ENCODE measurements at regions of chr9 and their contacts with region 1.

Region 1: DNA sequence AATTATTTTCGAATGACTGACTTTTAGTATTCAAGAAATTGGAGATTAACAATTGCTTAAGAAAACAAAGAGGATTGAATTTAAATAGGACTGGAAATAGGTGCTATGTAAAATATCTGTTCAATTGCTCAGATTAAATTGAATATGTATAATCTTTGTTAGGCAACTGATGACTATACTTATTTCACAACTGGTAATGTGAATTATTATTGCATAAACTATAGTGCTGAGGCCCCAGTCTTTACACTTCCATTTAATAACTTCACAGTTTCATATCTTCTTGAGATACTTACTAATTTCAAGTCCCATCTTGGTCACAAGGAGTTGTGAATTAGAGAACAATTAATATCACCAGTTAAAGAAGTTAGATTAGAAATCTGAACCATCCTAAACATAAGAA is 16.7 kb downstream of the CEP78 start:
- DNase-seq: no peak
- H3K4me3 ChIP-seq: no peak overlapping the region
- H3K27ac ChIP-seq: no peak overlapping the region
- H3K4me1 ChIP-seq: no peaks in the 10 kb centered on the region
- CTCF ChIP-seq: no peak

Region 2: GRCh38 chr9:78437296-78437695 is 184.7 kb after region 1 on chr9:
- CTCF ChIA-PET with region 1: no interaction called
- POLR2A ChIA-PET with region 1: no interaction called
- intact Hi-C with region 1: no loop called
- DNase-seq: no peak
- H3K4me3 ChIP-seq: no peak overlapping the region
- H3K27ac ChIP-seq: no peak overlapping the region
- H3K4me1 ChIP-seq: no peaks in the 10 kb centered on the region
- CTCF ChIP-seq: no peak

Region 3: GRCh38 chr9:78533500-78533899 is 280.9 kb after region 1 on chr9:
- CTCF ChIA-PET with region 1: no interaction called
- POLR2A ChIA-PET with region 1: no interaction called
- intact Hi-C with region 1: no loop called
- DNase-seq: no peak
- H3K4me3 ChIP-seq: no peak overlapping the region
- H3K27ac ChIP-seq: no peak overlapping the region
- H3K4me1 ChIP-seq: no peaks in the 10 kb centered on the region
- CTCF ChIP-seq: no peak

Region 4: DNA sequence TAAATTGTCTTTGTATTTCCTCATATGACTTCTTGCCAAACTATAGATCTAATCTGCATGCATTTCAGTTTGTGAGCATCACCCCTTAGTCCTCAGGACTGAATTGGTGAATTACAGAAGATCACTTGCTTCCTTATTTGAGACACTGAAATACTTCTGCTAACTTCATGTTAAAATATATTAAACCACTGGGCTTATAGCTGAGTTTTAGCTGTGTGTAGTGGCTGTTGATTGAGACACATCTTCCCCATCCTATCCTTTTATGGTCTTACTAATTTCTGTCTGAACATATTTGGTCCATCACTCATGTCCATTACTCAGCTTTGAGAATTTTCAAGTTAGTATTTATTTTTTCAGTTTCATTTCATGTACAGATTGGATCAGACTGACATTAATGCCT is 340.2 kb after region 1 on chr9:
- CTCF ChIA-PET with region 1: no interaction called
- POLR2A ChIA-PET with region 1: no interaction called
- intact Hi-C with region 1: loop called (anchors 10 kb)
- DNase-seq: no peak
- H3K4me3 ChIP-seq: no peak overlapping the region
- H3K27ac ChIP-seq: no peak overlapping the region
- H3K4me1 ChIP-seq: no peaks in the 10 kb centered on the region
- CTCF ChIP-seq: no peak